Motor neuron (in vitro differentiated cells): ENCODE measurements at regions of chr18 and their contacts with region 1.

Region 1: DNA sequence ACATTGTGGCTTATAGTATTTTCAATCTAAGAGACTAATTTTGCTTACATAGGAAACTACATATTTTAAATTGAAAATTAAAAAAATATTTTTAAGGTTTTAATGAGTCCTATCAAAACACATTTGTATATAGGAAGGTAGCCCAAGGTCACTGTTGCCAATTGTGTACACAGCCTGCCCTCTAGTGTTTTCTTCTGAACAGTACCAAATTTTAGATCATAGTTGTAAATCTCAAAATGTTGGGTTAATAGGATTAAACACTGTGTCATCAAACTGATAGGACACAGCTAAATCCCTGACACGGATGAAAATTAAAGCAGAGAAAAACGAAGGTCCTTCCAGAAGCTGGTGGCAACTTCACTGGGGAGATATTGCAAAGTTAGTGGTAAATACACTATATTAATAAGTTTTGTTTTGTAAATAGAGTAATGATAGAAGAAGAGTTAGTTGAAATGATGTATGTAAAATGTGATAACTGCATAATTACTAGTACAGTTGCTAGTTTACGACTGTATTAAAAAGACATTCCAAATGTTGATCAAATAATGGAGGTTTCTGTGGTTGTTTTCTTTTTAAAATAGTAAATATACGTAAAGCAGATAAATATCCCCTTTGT is 19.7 kb downstream of the CLUL1 start:
- ATAC-seq: peak in 5 of 8 experiments; percentile 18 to 67 (median 54)
- H3K4me3 ChIP-seq: no peak overlapping the region
- H3K27ac ChIP-seq: no peak overlapping the region
- H3K4me1 ChIP-seq: no peaks in the 10 kb centered on the region

Region 2: GRCh38 chr18:286515-287310 is 329.8 kb before region 1 on chr18:
- in situ Hi-C with region 1: loop called in 2 of 9 experiments (anchors 10 kb)
- ATAC-seq: peak in 5 of 8 experiments; percentile 32 to 54 (median 41)
- H3K4me3 ChIP-seq: no peak overlapping the region
- H3K27ac ChIP-seq: no peak overlapping the region
- H3K4me1 ChIP-seq: no peaks in the 10 kb centered on the region